ENCODE measurements at regions of chr1 and their contacts with region 1.

Region 1: GRCh38 chr1:161038523-161039153 is at the start of gene TSTD1:
- DNase-seq: no peak
- H3K4me3 ChIP-seq: peak within 1 kb of the TSS; percentile 61 to 84 (median 78)
- H3K27ac ChIP-seq: peak within 1 kb of the TSS; percentile 77 to 91 (median 85)
- H3K4me1 ChIP-seq: peaks cover 5 to 39% (median 8%) of the 10 kb centered on the region in 3 donors
- H3K27me3 ChIP-seq: no peaks in the 10 kb centered on the region
- CTCF ChIP-seq: peak in 1 of 6 experiments; percentile 11
- POLR2A ChIP-seq: peak in 1 of 4 donors; percentile 70
- total RNA-seq, gene TSTD1: 69.3 to 99.0 (median 91.4) TPM

Region 2: DNA sequence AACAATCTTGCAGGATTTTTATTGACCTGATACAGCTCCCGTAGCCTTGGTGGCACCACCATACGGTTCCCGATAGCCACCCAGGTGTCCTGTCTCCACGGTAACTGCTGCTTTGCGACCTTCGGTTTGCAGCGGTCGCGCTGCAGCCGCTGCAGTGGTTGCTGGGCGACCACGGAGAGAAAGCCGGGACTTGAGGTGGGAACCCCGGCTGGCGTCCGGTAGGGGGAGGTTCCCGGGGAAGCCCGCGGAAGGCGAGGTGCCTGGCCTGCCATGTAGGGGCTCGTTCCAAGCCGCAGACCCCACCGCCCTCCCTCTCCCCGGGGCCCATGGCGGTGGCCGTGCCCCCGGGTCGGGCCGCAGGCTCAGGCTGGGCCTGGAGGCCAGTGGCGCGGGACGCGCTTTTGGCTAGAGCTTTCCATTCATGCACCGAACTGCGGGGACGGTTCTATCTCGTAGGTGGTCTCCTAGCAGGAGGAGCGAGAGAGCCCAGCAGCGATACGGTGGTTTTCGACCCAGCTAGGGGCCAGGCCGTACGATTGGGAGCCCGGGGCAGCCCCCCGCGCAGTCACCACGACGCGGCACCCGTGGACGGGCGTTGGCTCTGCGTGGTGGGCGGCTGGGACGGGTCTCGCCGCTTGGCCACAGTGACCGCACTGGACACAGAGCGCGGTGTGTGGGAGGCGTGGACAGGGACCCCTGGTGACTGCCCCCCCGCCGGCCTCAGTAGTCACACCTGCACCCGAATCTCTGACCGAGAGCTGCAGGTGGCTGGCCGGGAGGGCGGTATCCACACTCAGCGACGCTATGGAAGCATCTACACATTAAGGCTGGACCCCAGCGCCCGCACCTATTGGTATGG is 59.8 kb after region 1 on chr1 and contains the start of gene KLHDC9:
- intact Hi-C with region 1: loop called (anchors 10 kb)
- DNase-seq: no peak
- H3K4me3 ChIP-seq: peak within 1 kb of the TSS; percentile 39 to 84 (median 60)
- H3K27ac ChIP-seq: peak within 1 kb of the TSS; percentile 54 to 82 (median 82)
- H3K4me1 ChIP-seq: peaks cover 21 to 59% (median 33%) of the 10 kb centered on the region in 3 donors
- H3K27me3 ChIP-seq: no peaks in the 10 kb centered on the region
- CTCF ChIP-seq: peak in 1 of 6 experiments; percentile 18
- POLR2A ChIP-seq: no peak
- total RNA-seq, gene KLHDC9: 0.31 to 2.7 (median 1.7) TPM

Measured in esophagus squamous epithelium (tissue), 5 donors.